H1 (cell line): ENCODE measurements at regions of chr11 and their contacts with region 1.

Region 1: DNA sequence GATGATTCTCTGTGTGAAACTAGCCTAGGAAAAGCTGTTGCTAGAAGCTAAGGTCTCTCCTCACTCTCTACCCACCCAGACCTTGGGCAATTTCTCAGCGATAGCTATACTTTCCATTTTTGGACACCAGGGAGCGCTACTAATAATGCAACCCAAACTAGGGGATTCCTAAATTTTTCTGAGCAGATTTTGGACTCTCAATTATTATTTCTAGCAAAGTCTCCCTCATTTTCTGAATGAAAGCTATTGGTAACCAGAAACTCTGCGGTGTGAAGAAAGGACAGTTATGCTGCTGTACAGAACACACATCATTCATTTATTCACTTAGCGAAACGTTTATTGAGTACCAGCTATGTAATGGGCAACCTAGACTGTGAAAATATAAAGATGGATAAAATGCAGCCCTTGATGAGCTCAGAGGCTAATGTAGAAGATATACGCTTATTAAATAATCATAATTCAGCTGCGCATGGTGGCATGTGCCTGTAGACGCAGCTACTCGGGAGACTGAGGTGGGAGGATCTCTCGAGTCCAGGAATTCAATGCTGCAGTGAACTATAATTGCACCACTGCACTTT is 6.1 kb upstream of the STIM1 start:
- DNase-seq: no peak
- H3K4me3 ChIP-seq: no peak overlapping the region
- H3K27ac ChIP-seq: no peak overlapping the region
- H3K4me1 ChIP-seq: peaks cover 3 to 7% (median 5%) of the 10 kb centered on the region in 4 experiments; a peak in 6 of 7 replicates
- H3K27me3 ChIP-seq: no peaks in the 10 kb centered on the region
- CTCF ChIP-seq: peak in 2 of 3 experiments; percentile 58 to 63; a peak in 3 of 4 replicates
- EP300 ChIP-seq: no peak
- POLR2A ChIP-seq: no peak
- RAD21 ChIP-seq: peak; percentile 44 to 54; a peak in 3 of 4 replicates

Region 2: DNA sequence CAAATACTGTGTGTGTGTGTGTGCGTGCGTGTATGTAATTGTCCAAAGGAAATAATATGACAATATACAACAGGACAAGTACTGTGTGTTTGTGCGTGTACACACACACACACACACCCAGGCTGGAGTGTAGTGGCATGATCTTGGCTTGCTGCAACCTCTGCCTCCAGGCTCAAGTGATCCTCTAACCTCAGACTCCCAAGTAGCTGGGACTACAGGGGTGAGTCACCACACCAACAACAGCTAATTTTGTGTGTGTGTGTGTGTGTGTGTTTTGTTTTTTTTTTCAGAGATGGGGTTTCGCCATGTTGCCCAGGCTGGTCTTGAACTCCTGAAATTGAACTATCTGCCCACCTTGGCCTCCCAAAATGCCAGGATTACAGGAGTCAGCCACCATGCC is 113.6 kb before region 1 on chr11:
- CTCF ChIA-PET with region 1: no interaction called
- POLR2A ChIA-PET with region 1: no interaction called
- DNase-seq: no peak
- H3K4me3 ChIP-seq: no peak overlapping the region
- H3K27ac ChIP-seq: no peak overlapping the region
- H3K4me1 ChIP-seq: no peaks in the 10 kb centered on the region
- H3K27me3 ChIP-seq: no peaks in the 10 kb centered on the region
- CTCF ChIP-seq: no peak
- EP300 ChIP-seq: no peak
- POLR2A ChIP-seq: no peak
- RAD21 ChIP-seq: no peak

Region 3: GRCh38 chr11:3807909-3808860 is 41.2 kb before region 1 on chr11 and contains the start of gene PGAP2:
- CTCF ChIA-PET with region 1: interaction called, 14 read pairs
- POLR2A ChIA-PET with region 1: no interaction called
- DNase-seq: peak; percentile 54 to 90
- H3K4me3 ChIP-seq: peak within 1 kb of the TSS; percentile 66 to 84 (median 74)
- H3K27ac ChIP-seq: peak within 1 kb of the TSS; percentile 46; the same call in 1 of the 2 replicates
- H3K4me1 ChIP-seq: peaks cover 0 to 8% (median 5%) of the 10 kb centered on the region in 4 experiments; a peak in 5 of 7 replicates
- H3K27me3 ChIP-seq: no peaks in the 10 kb centered on the region
- CTCF ChIP-seq: peak; percentile 75 to 89 (median 86)
- EP300 ChIP-seq: no peak
- POLR2A ChIP-seq: peak in 1 of 2 experiments; percentile 61; a peak in 2 of 3 replicates
- RAD21 ChIP-seq: peak; percentile 73 to 76
- total RNA-seq, gene PGAP2: 56.0 and 56.5 TPM in 2 replicates

Region 4: DNA sequence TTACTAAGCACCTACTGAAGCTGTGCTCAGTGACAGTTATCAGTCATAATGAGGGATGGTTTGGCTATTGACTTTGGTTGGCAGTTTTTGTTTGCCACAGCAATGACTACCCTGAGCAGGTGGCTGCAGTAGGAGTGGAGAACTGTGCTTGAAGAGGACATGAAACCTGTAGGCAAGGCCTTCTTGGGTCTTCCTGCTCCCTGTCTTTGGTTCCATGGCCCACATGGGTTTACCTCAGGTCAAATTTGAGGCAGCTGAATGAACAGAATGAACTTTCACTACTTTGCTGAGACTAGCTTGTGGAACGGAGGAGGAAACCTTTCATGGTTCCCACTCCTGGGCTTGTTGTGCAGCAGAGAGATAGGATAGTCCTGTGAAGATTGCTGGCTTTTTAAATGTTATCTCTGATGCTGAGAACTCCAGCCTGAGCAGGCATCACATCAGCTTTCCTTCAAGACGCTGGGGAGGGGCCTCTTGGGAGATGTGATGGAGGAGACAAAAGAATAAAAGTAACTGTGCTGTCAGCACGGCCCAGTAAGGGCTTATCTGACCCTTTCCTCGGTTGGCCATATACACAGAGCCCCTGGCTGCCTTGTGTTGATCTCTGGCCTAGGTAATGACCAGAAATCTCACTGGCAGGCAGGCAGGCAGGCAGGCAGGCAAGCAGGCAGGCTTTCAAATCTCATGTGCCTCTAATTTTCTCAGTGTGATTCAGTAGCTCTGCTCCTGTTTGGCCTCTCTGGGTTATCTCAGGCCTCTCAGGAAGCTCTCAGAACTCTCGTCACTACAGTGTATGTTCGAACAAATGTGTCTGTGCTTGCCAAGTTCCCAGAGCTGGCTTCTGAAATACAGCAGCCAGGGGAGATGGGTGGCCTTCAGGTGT is 18.1 kb after region 1 on chr11:
- CTCF ChIA-PET with region 1: interaction called, 73 read pairs
- POLR2A ChIA-PET with region 1: interaction called, 3 read pairs
- DNase-seq: no peak
- H3K4me3 ChIP-seq: no peak overlapping the region
- H3K27ac ChIP-seq: no peak overlapping the region
- H3K4me1 ChIP-seq: peaks cover 0 to 1% (median under 1%) of the 10 kb centered on the region in 4 experiments; a peak in 2 of 7 replicates
- H3K27me3 ChIP-seq: no peaks in the 10 kb centered on the region
- CTCF ChIP-seq: no peak
- EP300 ChIP-seq: no peak
- POLR2A ChIP-seq: no peak
- RAD21 ChIP-seq: no peak

Region 5: GRCh38 chr11:3959015-3959919 is 109.9 kb after region 1 on chr11:
- CTCF ChIA-PET with region 1: interaction called, 36 read pairs
- POLR2A ChIA-PET with region 1: no interaction called
- DNase-seq: no peak
- H3K4me3 ChIP-seq: no peak overlapping the region
- H3K27ac ChIP-seq: no peak overlapping the region
- H3K4me1 ChIP-seq: no peaks in the 10 kb centered on the region
- H3K27me3 ChIP-seq: no peaks in the 10 kb centered on the region
- CTCF ChIP-seq: peak in 2 of 3 experiments; percentile 27 to 35; a peak in 2 of 4 replicates
- EP300 ChIP-seq: no peak
- POLR2A ChIP-seq: no peak
- RAD21 ChIP-seq: peak; percentile 32 to 42; a peak in 3 of 4 replicates

Region 6: DNA sequence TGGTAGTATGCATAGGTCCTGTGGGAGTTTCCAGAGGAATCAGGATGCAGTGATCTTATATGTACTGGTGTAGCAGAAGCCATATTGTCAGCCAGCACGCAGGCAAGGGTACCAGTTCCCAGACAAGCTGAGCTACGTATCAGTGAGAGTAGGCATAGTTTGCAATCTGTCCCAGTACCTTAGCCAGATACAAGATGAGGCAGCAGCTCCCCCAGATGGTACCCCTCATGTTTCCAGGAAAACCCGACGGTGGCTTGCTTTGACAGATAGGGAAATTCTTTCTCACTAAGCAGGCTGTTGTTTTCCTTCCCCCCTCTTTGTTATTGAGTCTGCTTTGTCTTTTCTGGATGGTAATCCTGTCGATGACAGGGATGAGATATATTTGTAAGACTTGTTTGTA is 135.5 kb after region 1 on chr11:
- CTCF ChIA-PET with region 1: interaction called, 34 read pairs
- POLR2A ChIA-PET with region 1: no interaction called
- DNase-seq: peak in 1 of 2 experiments; percentile 9
- H3K4me3 ChIP-seq: no peak overlapping the region
- H3K27ac ChIP-seq: no peak overlapping the region
- H3K4me1 ChIP-seq: no peaks in the 10 kb centered on the region
- H3K27me3 ChIP-seq: no peaks in the 10 kb centered on the region; a peak in 1 of 7 replicates
- CTCF ChIP-seq: peak; percentile 37 to 61 (median 51)
- EP300 ChIP-seq: no peak
- POLR2A ChIP-seq: no peak
- RAD21 ChIP-seq: peak; percentile 74 to 83

Region 7: DNA sequence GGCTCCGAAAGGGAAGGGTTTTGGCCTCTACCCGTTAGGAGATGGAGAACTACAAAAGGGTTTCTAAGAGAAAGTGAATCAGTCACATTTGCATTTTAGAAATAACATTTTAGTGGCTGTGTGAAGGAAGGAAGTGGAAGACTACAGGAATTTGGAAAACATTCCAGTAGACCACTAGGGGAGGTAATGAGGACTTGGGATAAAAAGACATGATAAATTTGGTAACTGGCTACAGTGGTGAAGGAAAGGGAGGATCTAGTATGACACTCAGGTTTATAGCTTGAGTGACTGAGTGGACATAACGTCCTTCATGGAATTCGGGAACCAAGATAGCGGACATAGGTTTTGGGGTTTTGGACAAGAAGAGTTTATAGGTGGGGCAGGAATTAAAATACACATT is 238.2 kb after region 1 on chr11:
- CTCF ChIA-PET with region 1: interaction called, 29 read pairs
- POLR2A ChIA-PET with region 1: no interaction called
- DNase-seq: no peak
- H3K4me3 ChIP-seq: no peak overlapping the region
- H3K27ac ChIP-seq: no peak overlapping the region
- H3K4me1 ChIP-seq: no peaks in the 10 kb centered on the region
- H3K27me3 ChIP-seq: 0 out of 7 replicates have a peak, but pooled peaks cover 0 to 4% (median 0%) of the 10 kb centered on the region in 4 experiments
- CTCF ChIP-seq: peak in 2 of 3 experiments; percentile 14 to 62; a peak in 2 of 4 replicates
- EP300 ChIP-seq: no peak
- POLR2A ChIP-seq: no peak
- RAD21 ChIP-seq: no peak